Mammary epithelial cell (primary cell): ENCODE measurements at regions of chr14 and their contacts with region 1.

Region 1: GRCh38 chr14:33792720-33793368 is 158.0 kb downstream of the EGLN3 start:
- DNase-seq: peak; percentile 48
- H3K4me3 ChIP-seq: no peak overlapping the region
- H3K27ac ChIP-seq: no peak overlapping the region
- H3K4me1 ChIP-seq: peaks cover 6% of the 10 kb centered on the region
- H3K27me3 ChIP-seq: no peaks in the 10 kb centered on the region
- CTCF ChIP-seq: peak; percentile 72 to 92

Region 2: GRCh38 chr14:32576088-32576795 is 1216.6 kb before region 1 on chr14:
- CTCF ChIA-PET with region 1: no interaction called
- dilution Hi-C with region 1: loop called (anchors 25 kb)
- in situ Hi-C with region 1: loop called (anchors 10 to 25 kb)
- intact Hi-C with region 1: loop called (anchors 2 kb)
- DNase-seq: peak; percentile 21
- H3K4me3 ChIP-seq: no peak overlapping the region
- H3K27ac ChIP-seq: no peak overlapping the region
- H3K4me1 ChIP-seq: no peaks in the 10 kb centered on the region
- H3K27me3 ChIP-seq: no peaks in the 10 kb centered on the region
- CTCF ChIP-seq: peak; percentile 91 to 96

Region 3: GRCh38 chr14:32710731-32711680 is 1081.8 kb before region 1 on chr14:
- CTCF ChIA-PET with region 1: interaction called, 4 read pairs
- dilution Hi-C with region 1: no loop called
- in situ Hi-C with region 1: loop called in 1 of 2 experiments (anchors 25 kb)
- intact Hi-C with region 1: loop called (anchors 1 kb)
- DNase-seq: no peak
- H3K4me3 ChIP-seq: no peak overlapping the region
- H3K27ac ChIP-seq: no peak overlapping the region
- H3K4me1 ChIP-seq: peaks cover 8% of the 10 kb centered on the region
- H3K27me3 ChIP-seq: no peaks in the 10 kb centered on the region
- CTCF ChIP-seq: peak; percentile 52 to 67

Region 4: DNA sequence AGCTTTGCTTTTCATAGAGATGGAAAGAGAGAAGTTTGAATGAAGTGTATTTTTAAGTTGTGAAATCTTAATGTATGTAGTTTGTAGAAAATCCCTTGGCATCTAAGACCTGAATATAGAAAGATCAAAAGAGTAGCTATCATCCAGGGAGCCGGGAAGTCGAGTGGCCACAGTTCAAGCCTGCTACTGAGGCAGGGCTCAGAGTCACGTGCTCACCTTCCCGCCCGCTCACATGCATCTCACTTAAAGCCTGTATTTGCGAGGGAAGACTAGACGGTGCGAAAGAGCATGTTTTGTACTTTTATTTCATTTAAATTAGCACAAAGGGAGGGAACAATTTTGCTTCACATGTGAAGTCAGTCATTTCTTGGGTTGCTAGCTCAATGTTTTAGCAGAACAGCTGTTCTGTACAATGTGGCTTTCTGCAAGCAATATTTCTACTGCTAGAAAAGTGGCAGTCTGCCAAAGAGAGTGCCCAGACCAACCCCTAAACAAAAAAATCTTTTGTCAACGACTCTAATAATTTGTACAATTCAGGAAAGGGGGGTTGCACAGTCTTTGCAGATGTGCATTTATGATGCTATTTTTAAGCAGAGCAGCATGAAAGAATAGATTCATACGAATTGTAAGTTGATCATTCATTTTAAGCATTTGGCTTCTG is 563.4 kb before region 1 on chr14:
- CTCF ChIA-PET with region 1: no interaction called
- dilution Hi-C with region 1: no loop called
- in situ Hi-C with region 1: no loop called
- intact Hi-C with region 1: loop called (anchors 10 kb)
- DNase-seq: no peak
- H3K4me3 ChIP-seq: no peak overlapping the region
- H3K27ac ChIP-seq: no peak overlapping the region
- H3K4me1 ChIP-seq: no peaks in the 10 kb centered on the region
- H3K27me3 ChIP-seq: no peaks in the 10 kb centered on the region
- CTCF ChIP-seq: no peak

Region 5: DNA sequence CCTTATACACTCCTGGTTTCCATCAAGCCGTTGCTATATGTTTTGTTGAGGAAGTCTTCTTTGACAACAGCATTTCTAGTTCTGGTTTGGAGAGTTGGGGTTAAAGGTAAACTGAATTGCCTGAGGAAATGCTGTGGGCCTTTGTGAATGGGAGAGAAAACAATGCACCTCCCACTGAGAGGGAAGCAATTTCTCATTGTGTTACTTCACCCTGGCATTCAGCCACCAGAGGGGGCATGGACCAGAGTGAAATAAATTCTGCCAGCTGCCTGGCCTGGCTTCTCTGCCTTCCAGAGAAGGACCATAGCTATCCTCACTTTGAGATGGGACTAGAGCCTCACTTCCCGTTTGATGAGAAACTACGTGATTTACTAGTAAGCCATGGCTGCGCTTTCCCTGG is 317.2 kb before region 1 on chr14:
- CTCF ChIA-PET with region 1: no interaction called
- dilution Hi-C with region 1: no loop called
- in situ Hi-C with region 1: loop called (anchors 10 to 25 kb)
- intact Hi-C with region 1: loop called (anchors 1 kb)
- DNase-seq: peak; percentile 38
- H3K4me3 ChIP-seq: no peak overlapping the region
- H3K27ac ChIP-seq: no peak overlapping the region
- H3K4me1 ChIP-seq: no peaks in the 10 kb centered on the region
- H3K27me3 ChIP-seq: no peaks in the 10 kb centered on the region
- CTCF ChIP-seq: peak; percentile 44 to 47

Region 6: DNA sequence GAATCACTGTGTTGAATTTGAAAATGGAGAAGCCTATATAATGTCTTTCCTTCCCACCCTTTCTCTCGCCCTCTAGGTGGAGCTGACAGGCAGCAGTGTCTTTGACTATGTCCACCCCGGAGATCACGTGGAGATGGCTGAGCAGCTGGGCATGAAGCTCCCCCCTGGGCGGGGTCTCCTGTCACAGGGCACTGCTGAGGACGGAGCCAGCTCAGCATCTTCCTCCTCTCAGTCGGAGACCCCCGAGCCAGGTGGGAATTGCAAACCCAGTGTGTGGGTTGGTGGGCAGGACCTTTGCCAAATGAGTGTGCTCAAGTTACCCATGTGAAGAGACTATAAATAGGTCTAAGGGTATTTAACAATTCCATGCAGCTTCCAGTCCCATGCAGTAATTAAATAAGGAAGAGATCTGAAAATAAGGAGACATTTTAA is 116.7 kb before region 1 on chr14:
- CTCF ChIA-PET with region 1: interaction called, 5 read pairs
- dilution Hi-C with region 1: no loop called
- in situ Hi-C with region 1: no loop called
- intact Hi-C with region 1: loop called (anchors 1 kb)
- DNase-seq: peak; percentile 27
- H3K4me3 ChIP-seq: no peak overlapping the region
- H3K27ac ChIP-seq: no peak overlapping the region
- H3K4me1 ChIP-seq: peaks cover 14% of the 10 kb centered on the region
- H3K27me3 ChIP-seq: no peaks in the 10 kb centered on the region
- CTCF ChIP-seq: peak; percentile 41 to 63

Region 7: GRCh38 chr14:34300882-34301734 is 508.3 kb after region 1 on chr14:
- CTCF ChIA-PET with region 1: no interaction called
- dilution Hi-C with region 1: no loop called
- in situ Hi-C with region 1: no loop called
- intact Hi-C with region 1: loop called (anchors 1 kb)
- DNase-seq: peak; percentile 46
- H3K4me3 ChIP-seq: no peak overlapping the region
- H3K27ac ChIP-seq: no peak overlapping the region
- H3K4me1 ChIP-seq: peaks cover 18% of the 10 kb centered on the region
- H3K27me3 ChIP-seq: no peaks in the 10 kb centered on the region
- CTCF ChIP-seq: peak; percentile 70 to 71